HCT116 (cell line): ENCODE measurements at regions of chr13 and their contacts with region 1.

Region 1: DNA sequence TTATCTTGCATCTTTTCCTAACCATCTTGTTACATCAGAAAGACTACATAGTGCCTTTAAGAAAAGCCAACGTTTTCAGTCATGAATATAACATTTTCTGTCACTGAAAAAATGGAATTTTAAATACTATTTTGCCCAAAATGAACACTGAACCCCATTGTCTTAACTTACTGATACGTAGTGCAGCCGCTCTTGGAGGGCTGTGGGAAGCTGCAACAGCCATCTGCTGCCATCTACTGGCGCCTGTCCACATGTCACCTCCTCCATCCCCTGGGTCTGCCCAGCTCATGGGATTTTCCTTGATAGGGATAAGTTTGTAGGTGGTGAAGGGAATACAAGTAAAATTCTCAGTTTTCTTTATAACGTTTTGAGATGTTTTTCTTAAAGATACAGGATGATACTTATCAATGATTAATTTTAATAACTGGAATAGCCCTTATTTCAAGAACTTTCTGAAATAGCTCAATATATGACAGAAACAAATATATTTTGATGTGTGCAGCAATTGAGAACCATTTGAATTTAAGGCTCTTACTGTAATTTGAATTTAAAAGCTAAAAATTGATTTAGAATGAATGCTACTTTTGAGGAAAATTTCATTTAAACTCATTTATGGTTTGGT is 73.7 kb downstream of the GGACT start:
- DNase-seq: peak; percentile 55
- ATAC-seq: peak; percentile 95
- H3K4me3 ChIP-seq: no peak overlapping the region
- H3K27ac ChIP-seq: no peak overlapping the region
- H3K4me1 ChIP-seq: peaks cover 32 to 33% of the 10 kb centered on the region in 2 experiments
- H3K27me3 ChIP-seq: no peaks in the 10 kb centered on the region
- CTCF ChIP-seq: peak; percentile 90 to 98 (median 92)
- POLR2A ChIP-seq: no peak
- RAD21 ChIP-seq: peak; percentile 98

Region 2: DNA sequence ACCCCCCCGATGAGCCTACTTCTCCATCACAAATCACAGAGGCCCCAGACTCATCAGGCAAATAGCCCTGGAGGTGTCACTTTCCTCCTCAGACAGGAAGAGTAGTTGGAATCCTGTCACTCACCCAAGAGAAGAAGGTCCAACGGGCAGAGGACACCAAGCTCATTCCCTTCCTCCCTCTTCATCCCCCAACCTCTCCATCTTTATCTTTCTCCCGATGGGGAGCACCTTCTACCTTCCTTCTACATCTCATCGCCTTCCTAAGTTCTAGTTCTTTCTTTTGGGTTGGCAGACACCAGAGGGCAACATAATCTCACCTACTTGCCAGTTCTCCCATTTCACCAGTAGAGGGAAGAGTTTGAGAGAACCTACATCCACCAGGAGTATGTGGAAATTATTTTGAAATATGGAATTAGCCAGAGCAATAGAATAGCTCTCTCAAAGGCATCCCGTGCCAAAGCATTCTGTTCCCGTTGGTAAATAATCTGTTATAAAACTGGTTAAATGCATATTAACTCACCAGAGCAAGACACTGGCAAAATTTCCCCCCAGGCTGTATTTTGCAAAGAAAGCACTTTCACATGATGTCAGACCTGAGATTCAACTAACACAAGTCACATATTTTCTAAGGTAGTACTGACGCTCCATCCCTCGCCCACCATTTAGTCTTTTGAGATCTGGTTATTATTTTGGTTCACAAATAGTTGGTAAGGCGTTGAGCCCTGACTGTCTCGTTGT is 598.4 kb before region 1 on chr13:
- CTCF ChIA-PET with region 1: interaction called, 11 read pairs
- POLR2A ChIA-PET with region 1: no interaction called
- RAD21 ChIA-PET with region 1: interaction called in 1 of 2 experiments, 4 read pairs
- intact Hi-C with region 1: loop called (anchors 1 kb)
- DNase-seq: peak; percentile 73
- ATAC-seq: peak; percentile 99
- H3K4me3 ChIP-seq: no peak overlapping the region
- H3K27ac ChIP-seq: no peak overlapping the region
- H3K4me1 ChIP-seq: no peaks in the 10 kb centered on the region
- H3K27me3 ChIP-seq: no peaks in the 10 kb centered on the region
- CTCF ChIP-seq: peak; percentile 99 to 100 (median 99)
- POLR2A ChIP-seq: no peak
- RAD21 ChIP-seq: peak; percentile 97

Region 3: GRCh38 chr13:100039740-100040139 is 475.2 kb before region 1 on chr13:
- CTCF ChIA-PET with region 1: no interaction called
- POLR2A ChIA-PET with region 1: no interaction called
- RAD21 ChIA-PET with region 1: no interaction called
- intact Hi-C with region 1: loop called (anchors 5 kb)
- DNase-seq: no peak
- ATAC-seq: no peak
- H3K4me3 ChIP-seq: no peak overlapping the region
- H3K27ac ChIP-seq: no peak overlapping the region
- H3K4me1 ChIP-seq: no peaks in the 10 kb centered on the region
- H3K27me3 ChIP-seq: no peaks in the 10 kb centered on the region
- CTCF ChIP-seq: no peak
- POLR2A ChIP-seq: no peak
- RAD21 ChIP-seq: no peak

Region 4: DNA sequence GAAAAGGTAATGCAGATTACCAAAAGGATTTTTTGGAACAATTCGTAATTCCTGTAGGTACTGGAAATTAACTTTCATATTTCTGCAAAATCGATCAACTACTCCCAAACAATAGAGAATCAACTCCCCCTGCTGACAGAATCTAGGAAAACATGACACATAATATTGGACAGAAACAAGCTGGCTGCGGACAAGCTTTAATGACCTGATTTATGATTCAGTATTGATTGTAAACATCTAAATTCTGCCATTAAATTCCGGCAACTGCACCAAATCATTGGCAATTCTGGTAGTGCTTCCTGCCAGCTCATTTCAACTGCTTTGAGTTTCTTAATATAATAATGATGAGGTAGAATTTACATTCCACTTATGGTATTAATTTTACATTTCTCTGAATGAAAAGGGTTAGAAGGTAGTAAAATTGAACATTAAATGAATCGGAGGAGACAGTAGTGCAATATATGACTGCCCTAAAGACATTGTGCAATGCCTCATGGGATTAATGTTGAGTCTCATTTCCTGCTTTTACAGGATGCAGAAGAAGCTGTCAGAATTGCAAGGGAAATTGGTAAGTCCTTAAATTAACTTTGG is 279.5 kb before region 1 on chr13:
- CTCF ChIA-PET with region 1: interaction called, 9 read pairs
- POLR2A ChIA-PET with region 1: no interaction called
- RAD21 ChIA-PET with region 1: interaction called, 3 to 4 read pairs
- intact Hi-C with region 1: loop called (anchors 2 kb)
- DNase-seq: peak; percentile 45
- ATAC-seq: peak; percentile 62; the same call in 1 of the 2 replicates
- H3K4me3 ChIP-seq: no peak overlapping the region
- H3K27ac ChIP-seq: no peak overlapping the region
- H3K4me1 ChIP-seq: peaks cover 18 to 20% of the 10 kb centered on the region in 2 experiments
- H3K27me3 ChIP-seq: no peaks in the 10 kb centered on the region
- CTCF ChIP-seq: peak; percentile 44 to 93 (median 71)
- POLR2A ChIP-seq: no peak
- RAD21 ChIP-seq: peak; percentile 89

Region 5: GRCh38 chr13:100392709-100393641 is 121.9 kb before region 1 on chr13:
- CTCF ChIA-PET with region 1: interaction called, 5 read pairs
- POLR2A ChIA-PET with region 1: no interaction called
- RAD21 ChIA-PET with region 1: interaction called in 1 of 2 experiments, 5 read pairs
- intact Hi-C with region 1: loop called (anchors 5 kb)
- DNase-seq: peak; percentile 98
- ATAC-seq: peak; percentile 79
- H3K4me3 ChIP-seq: peak overlapping the region in 1 of 2 experiments; percentile 46; a peak in 2 of 4 replicates
- H3K27ac ChIP-seq: peak overlapping the region; percentile 98
- H3K4me1 ChIP-seq: peaks cover 83 to 87% of the 10 kb centered on the region in 2 experiments
- H3K27me3 ChIP-seq: no peaks in the 10 kb centered on the region
- CTCF ChIP-seq: no peak
- POLR2A ChIP-seq: no peak
- RAD21 ChIP-seq: peak; percentile 49; the same call in 1 of the 2 replicates

Region 6: GRCh38 chr13:100608906-100609305 is 94.0 kb after region 1 on chr13:
- CTCF ChIA-PET with region 1: no interaction called
- POLR2A ChIA-PET with region 1: no interaction called
- RAD21 ChIA-PET with region 1: no interaction called
- intact Hi-C with region 1: no loop called
- DNase-seq: no peak
- ATAC-seq: peak; percentile 49; the same call in 1 of the 2 replicates
- H3K4me3 ChIP-seq: no peak overlapping the region
- H3K27ac ChIP-seq: no peak overlapping the region
- H3K4me1 ChIP-seq: peaks cover 0 to 7% of the 10 kb centered on the region in 2 experiments; a peak in 1 of 4 replicates
- H3K27me3 ChIP-seq: no peaks in the 10 kb centered on the region
- CTCF ChIP-seq: no peak
- POLR2A ChIP-seq: no peak
- RAD21 ChIP-seq: no peak